Activated B cell treated with CpG ODN at 0.5 μM for 24 hours (primary cell): ENCODE measurements at regions of chr7 and their contacts with region 1.

Region 1: GRCh38 chr7:23597094-23598091 is at the start of gene CCDC126:
- DNase-seq: peak; percentile 84
- ATAC-seq: peak; percentile 72
- H3K4me3 Mint-ChIP-seq: peak within 1 kb of the TSS; percentile 89
- H3K27ac Mint-ChIP-seq: peak within 1 kb of the TSS; percentile 51
- H3K4me1 Mint-ChIP-seq: peaks cover 58% of the 10 kb centered on the region
- H3K27me3 Mint-ChIP-seq: no peaks in the 10 kb centered on the region
- CTCF ChIP-seq: no peak
- total RNA-seq, gene CCDC126: 13.7 and 15.7 TPM in 2 replicates

Region 2: GRCh38 chr7:21945454-21946227 is 1651.8 kb before region 1 on chr7 and contains the start of gene CDCA7L:
- CTCF ChIA-PET with region 1: no interaction called
- POLR2A ChIA-PET with region 1: no interaction called
- intact Hi-C with region 1: loop called (anchors 5 kb)
- DNase-seq: peak; percentile 80
- ATAC-seq: peak; percentile 77
- H3K4me3 Mint-ChIP-seq: peak within 1 kb of the TSS; percentile 94
- H3K27ac Mint-ChIP-seq: peak within 1 kb of the TSS; percentile 96
- H3K4me1 Mint-ChIP-seq: peaks cover 70% of the 10 kb centered on the region
- H3K27me3 Mint-ChIP-seq: no peaks in the 10 kb centered on the region
- CTCF ChIP-seq: no peak
- total RNA-seq, gene CDCA7L: 69.8 and 70.3 TPM in 2 replicates

Region 3: DNA sequence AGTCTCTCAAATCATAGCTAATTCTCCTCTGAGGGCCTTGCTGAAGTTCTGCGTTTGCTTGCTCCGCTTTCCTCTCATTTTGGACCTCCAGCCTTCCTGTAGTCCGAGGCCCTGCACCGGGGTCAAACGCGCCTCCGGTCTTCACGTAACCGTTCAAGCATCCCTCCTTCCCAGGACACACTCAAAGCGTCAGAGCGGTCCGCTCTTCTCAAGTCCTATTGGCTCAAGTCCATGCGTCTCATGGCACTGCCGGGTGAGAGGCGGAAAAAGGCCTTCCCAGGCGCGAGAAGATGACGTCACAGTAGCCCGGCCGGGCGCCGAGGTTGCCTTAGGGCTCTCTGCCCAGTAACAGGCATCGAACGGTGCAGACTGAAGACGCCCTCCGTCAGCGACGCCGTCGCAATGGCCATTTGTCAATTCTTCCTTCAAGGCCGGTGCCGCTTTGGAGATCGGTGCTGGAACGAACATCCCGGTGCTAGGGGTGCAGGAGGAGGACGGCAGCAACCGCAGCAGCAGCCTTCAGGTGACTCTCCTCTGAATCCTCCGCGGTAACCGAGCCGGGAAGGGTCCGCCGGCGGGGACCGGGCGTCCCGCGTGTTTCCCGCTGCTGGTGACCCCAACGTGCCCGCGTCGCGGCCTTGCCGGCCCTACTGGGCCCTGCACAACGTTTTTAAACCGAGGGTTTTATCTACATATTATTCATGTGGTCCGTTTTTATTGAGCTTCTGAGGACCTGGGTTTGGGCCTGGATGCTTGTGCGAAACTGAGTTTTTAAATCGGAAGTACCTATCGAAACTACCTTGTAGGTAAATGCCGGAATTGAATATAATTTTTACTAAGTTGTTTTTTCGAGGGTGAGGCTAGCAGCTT is 415.5 kb before region 1 on chr7 and contains the start of gene NUP42:
- CTCF ChIA-PET with region 1: no interaction called
- POLR2A ChIA-PET with region 1: interaction called, 3 read pairs
- intact Hi-C with region 1: loop called (anchors 2 kb)
- DNase-seq: peak; percentile 90
- ATAC-seq: peak; percentile 90
- H3K4me3 Mint-ChIP-seq: peak within 1 kb of the TSS; percentile 94
- H3K27ac Mint-ChIP-seq: peak within 1 kb of the TSS; percentile 100
- H3K4me1 Mint-ChIP-seq: peaks cover 28% of the 10 kb centered on the region
- H3K27me3 Mint-ChIP-seq: no peaks in the 10 kb centered on the region
- CTCF ChIP-seq: no peak
- total RNA-seq, gene NUP42: 39.2 and 50.6 TPM in 2 replicates

Region 4: DNA sequence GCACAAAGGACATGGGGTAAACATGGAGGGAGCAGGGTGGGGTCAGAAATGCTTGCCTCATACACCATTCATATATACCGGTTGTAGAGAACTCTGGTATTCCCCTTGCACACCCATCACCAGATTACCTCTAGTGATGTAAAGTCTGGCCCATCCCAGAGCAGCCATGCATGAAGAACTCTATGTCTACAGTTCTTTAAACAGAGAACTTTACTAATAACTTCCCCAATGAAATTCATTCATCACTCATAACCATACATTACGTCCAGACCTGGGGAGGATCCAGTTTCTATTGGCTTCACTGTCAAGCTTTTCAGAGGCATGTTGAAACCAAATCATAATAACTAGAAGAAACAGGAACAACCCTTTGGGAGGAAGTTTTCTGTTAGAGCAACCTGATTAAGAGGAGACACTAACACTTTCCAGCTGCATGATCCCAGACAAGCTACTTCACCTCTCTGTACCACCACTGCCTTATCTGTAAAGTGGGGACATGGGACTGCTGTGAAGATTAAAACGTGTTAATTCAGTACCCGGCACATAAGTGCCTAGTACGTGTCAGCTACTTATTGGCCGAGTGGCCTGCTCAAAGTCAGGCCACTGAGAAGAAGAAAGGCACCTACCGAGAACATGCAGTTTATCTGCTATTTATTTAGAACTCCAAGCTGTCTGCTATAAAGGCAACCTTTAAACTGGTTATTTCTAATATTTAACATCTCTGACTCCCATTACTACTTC is 186.8 kb before region 1 on chr7:
- CTCF ChIA-PET with region 1: no interaction called
- POLR2A ChIA-PET with region 1: no interaction called
- intact Hi-C with region 1: loop called (anchors 1 kb)
- DNase-seq: no peak
- ATAC-seq: peak; percentile 93
- H3K4me3 Mint-ChIP-seq: peak overlapping the region; percentile 2
- H3K27ac Mint-ChIP-seq: peak overlapping the region; percentile 79
- H3K4me1 Mint-ChIP-seq: peaks cover 28% of the 10 kb centered on the region
- H3K27me3 Mint-ChIP-seq: no peaks in the 10 kb centered on the region
- CTCF ChIP-seq: no peak

Region 5: DNA sequence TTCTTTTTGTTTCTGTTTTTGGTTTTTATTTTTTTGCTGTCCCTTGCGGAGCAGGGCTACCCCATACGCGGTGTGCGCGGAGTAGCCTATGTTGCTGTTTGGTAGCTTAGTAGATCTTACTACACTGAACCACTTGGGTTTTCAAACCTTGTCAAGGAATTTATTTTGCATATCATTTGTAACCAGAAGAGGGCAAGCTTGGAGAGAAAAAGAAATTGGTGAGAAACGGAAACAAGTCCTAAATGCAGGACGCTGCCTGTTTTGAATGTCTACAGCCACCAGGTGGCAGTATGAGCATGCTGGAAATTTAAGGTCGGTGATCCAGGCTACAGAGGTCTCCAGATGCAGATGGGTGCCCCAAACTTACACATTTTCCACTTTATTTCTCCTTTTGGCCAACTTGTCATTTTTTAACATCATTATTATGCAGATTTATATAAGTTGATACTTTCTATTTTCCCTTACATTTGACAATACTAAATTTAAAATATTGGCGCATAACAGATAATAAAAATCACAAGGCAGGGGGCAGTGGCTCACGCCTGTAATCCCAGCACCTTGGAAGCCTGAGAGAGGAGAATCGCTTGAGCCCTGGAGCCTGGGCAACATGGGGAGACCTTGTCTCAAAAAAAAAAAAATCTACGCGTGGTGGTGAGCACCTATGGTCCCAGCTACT is 50.4 kb before region 1 on chr7:
- CTCF ChIA-PET with region 1: interaction called, 3 read pairs
- POLR2A ChIA-PET with region 1: no interaction called
- intact Hi-C with region 1: loop called (anchors 1 kb)
- DNase-seq: peak; percentile 40
- ATAC-seq: peak; percentile 91
- H3K4me3 Mint-ChIP-seq: no peak overlapping the region
- H3K27ac Mint-ChIP-seq: no peak overlapping the region
- H3K4me1 Mint-ChIP-seq: peaks cover 18% of the 10 kb centered on the region
- H3K27me3 Mint-ChIP-seq: no peaks in the 10 kb centered on the region
- CTCF ChIP-seq: no peak

Region 6: DNA sequence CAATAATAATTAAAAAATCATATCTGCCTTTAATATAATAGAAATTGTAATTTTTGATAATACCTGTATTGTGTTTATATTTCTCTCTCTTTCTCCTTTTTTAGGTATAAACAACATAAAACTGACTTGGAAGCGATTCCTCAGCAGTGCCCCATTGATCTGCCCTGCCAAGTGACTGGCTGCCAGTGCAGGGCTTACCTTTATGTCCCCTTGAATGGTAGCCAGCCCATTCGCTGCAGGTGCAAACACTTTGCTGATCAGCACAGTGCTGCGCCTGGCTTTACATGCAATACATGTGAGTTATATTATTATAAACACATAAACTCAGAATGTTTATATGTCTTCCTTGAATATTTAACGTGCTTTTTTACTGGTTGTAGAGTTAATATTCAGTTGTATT is 91.8 kb after region 1 on chr7:
- CTCF ChIA-PET with region 1: no interaction called
- POLR2A ChIA-PET with region 1: no interaction called
- intact Hi-C with region 1: no loop called
- DNase-seq: no peak
- ATAC-seq: no peak
- H3K4me3 Mint-ChIP-seq: no peak overlapping the region
- H3K27ac Mint-ChIP-seq: no peak overlapping the region
- H3K4me1 Mint-ChIP-seq: no peaks in the 10 kb centered on the region
- H3K27me3 Mint-ChIP-seq: no peaks in the 10 kb centered on the region
- CTCF ChIP-seq: no peak

Region 7: DNA sequence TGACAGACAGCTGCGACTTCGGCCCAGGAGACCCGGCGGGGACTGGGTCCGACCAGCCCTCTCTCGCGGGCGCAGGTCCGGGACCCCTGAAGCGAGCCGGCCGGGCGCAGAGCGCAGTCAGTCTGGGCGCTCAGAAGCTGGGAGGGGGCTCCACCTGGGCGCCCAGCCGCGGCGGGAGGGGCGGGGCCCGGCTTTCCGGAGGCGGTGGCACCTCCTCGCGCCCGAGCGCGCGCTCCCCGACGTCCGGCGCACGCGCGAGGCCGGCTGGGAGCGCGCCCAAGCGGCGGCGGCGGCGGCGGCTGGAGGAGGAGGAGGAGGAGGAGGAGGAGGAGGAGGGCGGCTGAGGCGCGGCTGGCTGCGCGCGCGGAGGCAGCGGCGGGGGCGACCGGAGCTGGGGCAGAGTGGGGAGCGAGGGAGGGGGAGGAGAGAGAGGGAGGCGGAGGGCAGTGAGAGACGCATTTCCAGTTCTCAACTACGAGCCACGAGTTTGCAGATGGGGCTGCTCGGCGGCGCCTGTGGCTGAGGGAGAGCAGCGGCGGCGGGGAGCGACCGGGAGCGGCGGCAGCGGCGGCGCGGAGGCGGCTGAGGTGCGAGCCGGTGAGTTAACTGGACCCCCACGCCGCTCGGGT is 975.7 kb after region 1 on chr7 and contains the start of gene PALS2:
- CTCF ChIA-PET with region 1: no interaction called
- POLR2A ChIA-PET with region 1: no interaction called
- intact Hi-C with region 1: loop called (anchors 1 kb)
- DNase-seq: peak; percentile 87
- ATAC-seq: peak; percentile 73
- H3K4me3 Mint-ChIP-seq: peak within 1 kb of the TSS; percentile 91
- H3K27ac Mint-ChIP-seq: peak within 1 kb of the TSS; percentile 89
- H3K4me1 Mint-ChIP-seq: peaks cover 40% of the 10 kb centered on the region
- H3K27me3 Mint-ChIP-seq: no peaks in the 10 kb centered on the region
- CTCF ChIP-seq: no peak
- total RNA-seq, gene PALS2: 29.8 and 34.8 TPM in 2 replicates

Region 8: DNA sequence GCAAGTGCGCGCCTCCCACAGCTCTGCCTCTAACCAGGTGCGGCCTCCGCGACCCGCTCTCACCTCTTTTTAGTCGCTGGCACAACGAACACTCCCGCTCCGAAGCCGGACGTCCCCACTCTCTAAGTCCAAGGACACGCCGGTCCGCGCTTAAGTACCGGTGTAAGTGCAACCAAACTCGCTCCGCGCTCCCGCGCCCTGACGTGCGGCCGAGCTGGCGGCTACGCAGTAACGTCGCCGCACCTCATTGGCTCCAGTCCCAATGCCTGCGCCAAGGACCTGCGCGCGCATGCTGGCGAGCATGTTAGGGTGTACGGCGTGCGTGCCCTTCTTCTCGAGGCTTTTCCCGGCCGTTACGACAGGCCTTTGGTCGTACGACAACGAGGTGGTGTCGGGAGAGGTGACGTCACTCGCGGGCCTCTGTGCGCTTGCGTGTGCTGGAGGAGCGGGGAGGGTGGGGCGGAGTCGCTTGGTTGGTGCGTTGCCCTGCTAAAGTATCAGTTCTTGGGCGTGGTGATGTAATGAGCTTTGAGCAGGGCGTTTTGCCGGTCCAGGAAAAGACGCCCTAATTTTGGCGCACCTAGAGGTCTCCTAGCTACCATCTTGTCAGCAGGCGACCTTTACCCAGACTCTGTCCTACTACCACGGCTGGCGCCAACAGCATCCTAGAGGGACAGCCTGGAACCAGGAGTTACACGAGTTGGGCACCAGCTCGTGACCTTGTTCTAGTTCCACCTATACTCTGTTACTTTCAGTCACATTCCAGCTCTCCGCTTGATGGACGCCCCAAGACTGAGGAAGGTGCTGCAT is 1527.9 kb after region 1 on chr7 and contains the start of gene CYCS:
- CTCF ChIA-PET with region 1: no interaction called
- POLR2A ChIA-PET with region 1: interaction called, 4 read pairs
- intact Hi-C with region 1: loop called (anchors 1 kb)
- DNase-seq: peak; percentile 98
- ATAC-seq: peak; percentile 91
- H3K4me3 Mint-ChIP-seq: peak within 1 kb of the TSS; percentile 99
- H3K27ac Mint-ChIP-seq: peak within 1 kb of the TSS; percentile 99
- H3K4me1 Mint-ChIP-seq: peaks cover 31% of the 10 kb centered on the region
- H3K27me3 Mint-ChIP-seq: peaks cover 1% of the 10 kb centered on the region
- CTCF ChIP-seq: no peak
- total RNA-seq, gene CYCS: 73.0 and 85.0 TPM in 2 replicates